Upper lobe of right lung (tissue), 1 donor: ENCODE measurements at regions of chr4 and their contacts with region 1.

Region 1: DNA sequence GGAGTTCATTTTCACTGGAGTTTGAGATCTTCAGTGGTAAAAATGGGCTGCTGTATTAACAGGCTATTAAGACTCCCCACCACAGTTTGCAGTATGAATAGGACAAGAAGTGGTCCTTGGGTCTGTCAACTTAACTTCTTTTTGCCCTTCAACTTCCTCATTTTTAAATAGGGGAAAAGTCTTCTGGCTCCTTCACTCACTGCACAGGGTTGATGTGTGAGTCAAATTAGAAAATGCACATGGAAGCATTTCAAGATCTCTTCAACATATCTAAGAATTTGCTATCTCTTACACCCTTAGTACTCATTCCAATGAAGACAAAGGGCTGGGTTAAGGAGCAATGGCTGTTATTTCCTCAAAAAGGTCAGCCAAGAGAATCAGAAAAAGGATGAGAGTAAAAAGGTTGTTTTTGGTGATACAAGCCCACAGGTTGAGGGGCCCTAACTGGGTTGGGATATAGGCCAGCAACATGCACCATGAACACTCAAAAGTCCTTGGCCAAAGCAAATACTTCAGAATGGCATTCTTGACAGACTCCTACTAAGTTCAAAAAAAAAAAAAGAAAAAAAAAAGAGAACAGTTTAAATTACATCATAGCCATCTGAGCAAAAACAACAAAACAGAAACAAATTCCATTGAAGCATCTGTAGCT is 13.4 kb downstream of the PDE5A start:
- DNase-seq: no peak
- ATAC-seq: peak; percentile 69
- H3K4me3 ChIP-seq: no peak overlapping the region
- H3K27ac ChIP-seq: no peak overlapping the region
- H3K4me1 ChIP-seq: peaks cover 6% of the 10 kb centered on the region
- H3K27me3 ChIP-seq: no peaks in the 10 kb centered on the region
- CTCF ChIP-seq: no peak

Region 2: GRCh38 chr4:119550857-119551532 is 64.2 kb before region 1 on chr4:
- intact Hi-C with region 1: loop called (anchors 5 kb)
- DNase-seq: no peak
- ATAC-seq: no peak
- H3K4me3 ChIP-seq: no peak overlapping the region
- H3K27ac ChIP-seq: no peak overlapping the region
- H3K4me1 ChIP-seq: no peaks in the 10 kb centered on the region
- H3K27me3 ChIP-seq: no peaks in the 10 kb centered on the region
- CTCF ChIP-seq: no peak

Region 3: GRCh38 chr4:119841361-119841760 is 226.2 kb after region 1 on chr4:
- intact Hi-C with region 1: no loop called
- DNase-seq: no peak
- ATAC-seq: no peak
- H3K4me3 ChIP-seq: no peak overlapping the region
- H3K27ac ChIP-seq: no peak overlapping the region
- H3K4me1 ChIP-seq: no peaks in the 10 kb centered on the region
- H3K27me3 ChIP-seq: no peaks in the 10 kb centered on the region
- CTCF ChIP-seq: no peak

Region 4: DNA sequence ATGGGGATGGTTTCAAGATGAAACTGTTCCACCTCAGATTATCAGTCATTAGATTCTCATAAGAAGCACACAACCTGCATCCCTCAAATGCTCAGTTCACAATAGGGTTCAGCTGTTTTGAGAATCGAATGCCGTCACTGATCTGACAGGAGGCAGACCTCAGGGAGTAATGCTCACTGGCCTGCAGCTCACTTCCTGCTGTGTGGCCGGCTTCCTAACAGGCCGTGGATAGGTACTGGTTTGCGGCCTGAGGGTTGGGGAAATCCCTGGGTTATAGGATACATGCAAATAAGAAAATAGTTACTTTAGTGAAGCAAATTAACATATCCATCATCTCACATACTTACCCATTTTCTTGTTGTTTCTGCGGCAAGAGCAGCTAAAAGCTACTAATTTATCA is 291.1 kb after region 1 on chr4:
- intact Hi-C with region 1: no loop called
- DNase-seq: no peak
- ATAC-seq: no peak
- H3K4me3 ChIP-seq: no peak overlapping the region
- H3K27ac ChIP-seq: no peak overlapping the region
- H3K4me1 ChIP-seq: no peaks in the 10 kb centered on the region
- H3K27me3 ChIP-seq: no peaks in the 10 kb centered on the region
- CTCF ChIP-seq: no peak